Esophagus squamous epithelium (tissue), 5 donors: ENCODE measurements at regions of chr10 and their contacts with region 1.

Region 1: GRCh38 chr10:4649886-4650508 is 176.0 kb upstream of the AKR1E2 start:
- DNase-seq: no peak
- H3K4me3 ChIP-seq: no peak overlapping the region
- H3K27ac ChIP-seq: peak overlapping the region in 3 of 4 donors; percentile 5 to 31 (median 25)
- H3K4me1 ChIP-seq: peaks cover 0 to 24% (median 6%) of the 10 kb centered on the region in 3 donors
- H3K27me3 ChIP-seq: no peaks in the 10 kb centered on the region
- CTCF ChIP-seq: no peak
- POLR2A ChIP-seq: no peak

Region 2: GRCh38 chr10:3248888-3249758 is 1400.9 kb before region 1 on chr10:
- intact Hi-C with region 1: loop called (anchors 10 kb)
- DNase-seq: no peak
- H3K4me3 ChIP-seq: peak overlapping the region in 1 of 4 donors; percentile 14
- H3K27ac ChIP-seq: peak overlapping the region; percentile 36 to 83 (median 68)
- H3K4me1 ChIP-seq: peaks cover 0 to 13% (median 6%) of the 10 kb centered on the region in 3 donors
- H3K27me3 ChIP-seq: no peaks in the 10 kb centered on the region
- CTCF ChIP-seq: no peak
- POLR2A ChIP-seq: no peak